Astrocyte of the cerebellum (primary cell): ENCODE measurements at regions of chr2 and their contacts with region 1.

Region 1: GRCh38 chr2:240179941-240180666 is 39.6 kb upstream of the OTOS start:
- DNase-seq: no peak
- H3K4me3 ChIP-seq: no peak overlapping the region
- CTCF ChIP-seq: no peak

Region 2: DNA sequence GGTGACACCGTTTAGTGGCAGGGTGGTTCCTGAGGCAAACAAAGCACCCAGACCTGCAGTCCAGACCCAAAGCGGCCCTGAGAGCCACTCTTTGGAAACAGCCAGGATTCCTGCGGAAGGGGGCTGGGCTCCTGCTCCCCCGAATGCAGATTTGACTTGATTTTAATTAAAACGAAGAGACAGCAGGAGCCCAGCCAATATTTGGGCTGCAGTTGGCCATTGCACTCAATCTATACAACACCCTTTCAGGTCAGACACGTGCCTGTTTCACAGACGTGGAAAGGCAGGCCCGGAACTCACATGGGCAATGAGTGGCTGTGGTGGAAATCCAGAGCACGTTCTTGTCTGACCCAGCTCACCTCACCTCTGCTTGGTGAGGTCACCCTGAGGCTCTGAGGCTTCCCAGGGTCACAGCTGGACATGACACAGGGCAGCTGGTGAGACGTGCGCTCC is 277.3 kb before region 1 on chr2:
- in situ Hi-C with region 1: no loop called
- DNase-seq: no peak
- H3K4me3 ChIP-seq: no peak overlapping the region
- CTCF ChIP-seq: no peak

Region 3: DNA sequence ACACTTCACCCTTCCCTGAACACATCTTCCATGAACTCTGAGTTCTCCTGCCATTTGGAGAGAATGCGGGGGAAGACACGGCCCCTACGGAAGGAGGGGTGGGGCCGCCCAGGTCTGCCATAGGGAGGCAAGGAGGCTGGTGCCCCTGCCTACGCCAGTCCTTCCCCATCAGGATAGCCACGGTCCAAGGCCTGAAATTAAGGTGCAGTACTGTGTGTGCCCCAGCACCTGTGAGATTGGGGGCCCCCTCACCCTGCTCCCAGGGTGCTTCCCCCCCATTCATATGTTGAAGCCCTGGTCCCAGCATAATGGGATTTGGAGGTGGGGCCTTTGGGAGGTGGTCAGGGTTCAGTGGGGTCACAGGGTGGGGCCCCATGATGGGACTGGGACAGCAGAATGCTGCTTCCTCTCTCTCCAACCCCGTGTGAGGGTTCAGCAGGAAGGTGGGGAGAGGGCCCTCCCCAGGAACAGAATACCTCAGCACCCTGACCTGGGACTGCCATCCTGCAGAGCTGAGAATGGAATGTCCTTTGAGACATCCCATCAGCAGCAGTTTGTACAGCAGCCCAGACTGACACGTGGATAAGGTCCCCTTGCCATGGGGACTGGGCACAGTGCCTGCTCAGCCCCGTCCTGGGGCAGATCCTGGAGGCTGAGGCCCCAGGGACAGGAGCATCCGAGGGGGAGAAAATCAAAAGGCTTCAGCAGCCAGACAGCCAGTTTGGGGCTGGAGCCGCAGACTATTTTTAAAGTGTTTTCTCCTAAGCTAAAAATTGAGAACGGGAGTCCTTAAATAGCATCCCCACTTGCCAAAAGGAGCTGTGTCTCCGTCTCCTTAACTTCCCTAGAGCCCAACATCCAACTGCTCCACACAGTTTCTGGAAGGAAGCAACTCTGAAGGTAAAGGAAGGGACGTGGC is 260.1 kb before region 1 on chr2:
- in situ Hi-C with region 1: no loop called
- DNase-seq: no peak
- H3K4me3 ChIP-seq: no peak overlapping the region
- CTCF ChIP-seq: no peak

Region 4: GRCh38 chr2:240131931-240132650 is 48.0 kb before region 1 on chr2:
- in situ Hi-C with region 1: no loop called
- DNase-seq: no peak
- H3K4me3 ChIP-seq: no peak overlapping the region
- CTCF ChIP-seq: no peak

Region 5: DNA sequence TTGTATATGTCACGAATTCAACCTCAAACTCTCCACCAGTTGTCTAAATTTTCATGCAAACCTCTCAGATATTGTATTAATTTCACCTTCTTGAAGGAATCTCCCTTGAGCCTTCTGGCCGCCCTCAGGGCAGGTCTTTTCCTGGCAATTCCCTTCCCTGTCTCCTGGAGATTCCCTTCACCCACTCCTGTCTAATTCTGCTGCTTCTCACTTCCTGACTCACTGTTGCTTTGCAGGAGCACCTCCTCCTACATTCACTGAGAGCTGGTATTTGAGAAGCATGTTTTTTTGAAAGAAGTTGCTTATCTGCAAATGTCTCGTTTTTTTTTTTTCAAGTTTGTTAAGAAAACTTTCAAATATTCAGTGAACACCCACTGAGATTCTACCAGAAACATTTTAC is 40.3 kb after region 1 on chr2:
- in situ Hi-C with region 1: loop called (anchors 5 kb)
- DNase-seq: no peak
- H3K4me3 ChIP-seq: no peak overlapping the region
- CTCF ChIP-seq: no peak